Activated T-helper 1 cell treated with anti-CD3 and anti-CD28 coated beads, Interleukin-12 subunit alpha, Interleukin-12 subunit beta, Interleukin-2, Interleukin-4 antibody, amounts not matched to agents 30 ng/mL and 10 ng/mL and 1 ng/mL, durations not matched to agents 14 hours and 24 hours and 36 hours (primary cell): ENCODE measurements at regions of chr5 and their contacts with region 1.

Region 1: GRCh38 chr5:61055434-61056006 is 106.7 kb downstream of the SMIM15 start:
- DNase-seq: no peak
- H3K4me3 Mint-ChIP-seq: no peak overlapping the region
- H3K27ac Mint-ChIP-seq: no peak overlapping the region
- H3K4me1 Mint-ChIP-seq: no peaks in the 10 kb centered on the region
- H3K27me3 Mint-ChIP-seq: no peaks in the 10 kb centered on the region

Region 2: GRCh38 chr5:60960591-60960990 is 94.9 kb before region 1 on chr5:
- intact Hi-C with region 1: loop called (anchors 5 kb)
- DNase-seq: no peak
- H3K4me3 Mint-ChIP-seq: no peak overlapping the region
- H3K27ac Mint-ChIP-seq: no peak overlapping the region
- H3K4me1 Mint-ChIP-seq: no peaks in the 10 kb centered on the region
- H3K27me3 Mint-ChIP-seq: no peaks in the 10 kb centered on the region

Region 3: GRCh38 chr5:61044545-61044944 is 11.0 kb before region 1 on chr5:
- intact Hi-C with region 1: no loop called
- DNase-seq: no peak
- H3K4me3 Mint-ChIP-seq: no peak overlapping the region
- H3K27ac Mint-ChIP-seq: no peak overlapping the region
- H3K4me1 Mint-ChIP-seq: no peaks in the 10 kb centered on the region
- H3K27me3 Mint-ChIP-seq: no peaks in the 10 kb centered on the region

Region 4: DNA sequence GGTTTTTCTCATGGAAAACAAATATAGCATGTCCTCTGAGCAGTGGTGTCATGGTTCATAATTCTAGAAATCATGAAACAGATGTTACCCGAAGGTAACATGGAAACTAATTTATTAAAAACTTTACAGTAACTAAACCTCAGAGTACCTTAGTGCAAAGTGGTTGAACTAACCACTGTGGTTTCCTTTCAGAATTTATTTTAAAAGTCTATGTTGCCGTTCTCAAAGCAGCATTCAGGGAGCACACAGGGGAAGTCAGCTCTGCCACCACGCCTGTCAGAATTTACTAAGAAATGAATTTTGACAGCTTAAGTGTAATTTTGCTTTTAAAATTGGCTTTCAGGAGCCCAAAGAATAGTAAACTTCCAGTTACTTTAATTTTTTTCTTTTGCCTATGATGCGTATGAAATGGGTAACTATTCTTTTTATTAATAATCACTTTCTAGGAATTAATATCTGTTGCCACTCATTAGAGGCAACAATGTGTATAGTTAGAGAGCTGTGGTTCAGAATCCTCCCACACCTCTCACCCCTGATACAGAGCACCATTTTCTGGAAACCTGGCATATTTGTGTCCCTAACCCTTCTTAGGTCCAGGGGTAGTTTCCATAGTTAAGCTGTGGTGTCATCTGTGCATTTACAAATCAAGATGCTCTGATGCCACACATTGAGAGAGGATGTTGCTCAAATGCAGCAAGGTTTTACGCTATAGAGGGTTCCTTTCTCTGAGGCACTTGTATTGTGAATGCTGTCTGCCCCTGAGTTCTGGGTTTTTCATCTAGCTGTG is 479.2 kb after region 1 on chr5:
- intact Hi-C with region 1: loop called (anchors 10 kb)
- DNase-seq: no peak
- H3K4me3 Mint-ChIP-seq: peak overlapping the region; percentile 25
- H3K27ac Mint-ChIP-seq: peak overlapping the region; percentile 69
- H3K4me1 Mint-ChIP-seq: peaks cover 16% of the 10 kb centered on the region
- H3K27me3 Mint-ChIP-seq: no peaks in the 10 kb centered on the region

Region 5: DNA sequence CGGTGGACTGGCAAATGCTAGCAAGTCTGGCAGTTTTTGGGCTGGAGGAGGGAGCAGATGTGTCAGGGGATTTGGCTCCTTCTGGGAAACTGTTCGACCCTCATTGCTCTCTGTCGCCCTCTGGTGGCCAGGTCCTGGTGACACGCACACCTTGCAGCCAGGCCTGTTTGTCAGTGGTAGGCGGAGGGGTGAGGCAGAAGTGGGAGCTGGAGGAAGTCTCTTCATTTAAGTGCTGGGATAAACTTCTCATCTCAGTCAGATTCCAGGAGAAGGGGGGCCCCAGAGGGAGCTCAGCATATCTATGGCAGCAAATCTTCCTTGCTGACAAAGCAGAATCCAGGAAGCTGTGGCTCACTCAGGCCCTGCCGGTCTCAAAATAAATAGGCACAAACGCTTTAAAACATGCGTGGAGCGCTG is 603.1 kb after region 1 on chr5:
- intact Hi-C with region 1: loop called (anchors 1 kb)
- DNase-seq: peak; percentile 51
- H3K4me3 Mint-ChIP-seq: no peak overlapping the region
- H3K27ac Mint-ChIP-seq: no peak overlapping the region
- H3K4me1 Mint-ChIP-seq: no peaks in the 10 kb centered on the region
- H3K27me3 Mint-ChIP-seq: peaks cover 7% of the 10 kb centered on the region

Region 6: DNA sequence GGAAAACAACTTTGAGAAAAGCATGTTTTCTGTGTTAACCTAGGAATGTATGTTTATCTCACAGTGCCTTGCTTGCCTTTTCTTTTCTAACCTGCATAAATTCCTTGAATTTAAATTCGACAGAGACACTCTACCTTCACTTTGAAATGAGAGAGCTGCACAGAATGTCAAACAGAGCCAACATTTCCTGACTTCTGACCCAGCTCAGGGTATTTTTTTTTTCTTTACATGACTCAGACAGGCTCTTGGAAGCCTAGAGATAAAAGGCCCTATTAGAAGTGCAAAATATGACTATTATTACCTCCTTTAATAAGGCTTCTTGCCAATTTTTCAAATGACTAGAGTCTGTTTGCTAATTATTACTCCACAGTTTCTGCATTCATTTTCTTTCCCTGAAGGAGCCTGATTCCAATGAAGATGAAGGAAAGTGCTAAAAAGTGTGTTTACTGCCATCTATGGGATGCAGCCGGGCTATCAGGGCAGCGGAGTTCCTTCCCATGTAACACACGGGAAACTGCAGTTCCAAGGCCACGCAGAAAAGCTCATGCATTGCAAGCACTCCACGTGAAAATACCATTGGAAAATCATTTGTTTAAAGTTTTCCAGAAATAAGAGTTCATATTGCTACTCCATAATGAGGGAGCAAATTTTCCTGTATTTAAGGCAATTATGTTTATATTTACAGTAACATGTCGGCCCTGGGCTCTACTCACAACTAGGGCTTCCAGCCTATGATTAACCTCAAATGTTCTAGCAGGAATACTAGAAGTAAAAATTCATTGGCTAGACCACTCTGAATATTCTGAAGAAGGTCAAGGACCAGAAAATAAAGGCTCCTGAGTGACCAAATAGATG is 762.2 kb after region 1 on chr5:
- intact Hi-C with region 1: loop called (anchors 10 kb)
- DNase-seq: no peak
- H3K4me3 Mint-ChIP-seq: no peak overlapping the region
- H3K27ac Mint-ChIP-seq: no peak overlapping the region
- H3K4me1 Mint-ChIP-seq: no peaks in the 10 kb centered on the region
- H3K27me3 Mint-ChIP-seq: peaks cover 7% of the 10 kb centered on the region

Region 7: GRCh38 chr5:62143268-62144229 is 1088.0 kb after region 1 on chr5:
- intact Hi-C with region 1: loop called (anchors 5 kb)
- DNase-seq: no peak
- H3K4me3 Mint-ChIP-seq: no peak overlapping the region
- H3K27ac Mint-ChIP-seq: no peak overlapping the region
- H3K4me1 Mint-ChIP-seq: no peaks in the 10 kb centered on the region
- H3K27me3 Mint-ChIP-seq: peaks cover 20% of the 10 kb centered on the region